PC-9 (cell line): ENCODE measurements at regions of chr20 and their contacts with region 1.

Region 1: GRCh38 chr20:58017237-58017969 is 211.1 kb downstream of the ANKRD60 start:
- DNase-seq: peak; percentile 80 to 95
- H3K4me3 ChIP-seq: no peak overlapping the region; the same call in 1 of the 2 replicates
- H3K27ac ChIP-seq: peak overlapping the region; percentile 93
- H3K4me1 ChIP-seq: peaks cover 87% of the 10 kb centered on the region
- H3K27me3 ChIP-seq: no peaks in the 10 kb centered on the region
- CTCF ChIP-seq: no peak

Region 2: DNA sequence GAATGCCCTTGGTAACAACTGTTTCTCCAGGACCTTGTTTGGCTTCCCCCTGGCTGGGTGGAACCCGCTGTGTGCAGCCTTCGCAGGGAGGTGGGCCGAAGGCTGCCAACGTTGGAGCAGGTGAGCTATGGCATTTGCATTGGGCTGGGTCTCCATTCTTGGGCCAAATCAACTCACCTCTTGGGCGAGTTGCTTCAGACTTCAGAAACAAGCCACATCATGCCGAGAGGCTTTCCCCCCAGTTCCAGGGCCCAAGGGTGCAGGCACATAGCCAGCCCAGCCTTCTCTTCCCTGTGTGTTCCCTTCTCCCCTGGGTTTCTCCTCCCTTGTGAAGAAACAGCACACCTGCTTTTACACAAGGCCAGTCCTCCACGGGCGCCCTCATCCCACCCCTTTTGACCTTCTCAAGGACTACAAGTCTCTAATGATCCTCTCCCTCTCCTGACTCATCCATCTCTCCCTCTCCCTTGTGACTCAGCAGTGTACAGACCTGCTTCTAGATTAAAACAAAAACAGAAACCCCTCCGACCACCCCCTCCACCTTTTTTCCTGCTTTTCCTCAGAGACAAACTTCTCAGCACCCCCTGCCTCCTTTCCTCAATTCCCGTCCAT is 1442.8 kb before region 1 on chr20:
- CTCF ChIA-PET with region 1: no interaction called
- POLR2A ChIA-PET with region 1: no interaction called
- intact Hi-C with region 1: no loop called
- DNase-seq: no peak
- H3K4me3 ChIP-seq: no peak overlapping the region
- H3K27ac ChIP-seq: no peak overlapping the region
- H3K4me1 ChIP-seq: peaks cover 12% of the 10 kb centered on the region
- H3K27me3 ChIP-seq: no peaks in the 10 kb centered on the region
- CTCF ChIP-seq: no peak

Region 3: DNA sequence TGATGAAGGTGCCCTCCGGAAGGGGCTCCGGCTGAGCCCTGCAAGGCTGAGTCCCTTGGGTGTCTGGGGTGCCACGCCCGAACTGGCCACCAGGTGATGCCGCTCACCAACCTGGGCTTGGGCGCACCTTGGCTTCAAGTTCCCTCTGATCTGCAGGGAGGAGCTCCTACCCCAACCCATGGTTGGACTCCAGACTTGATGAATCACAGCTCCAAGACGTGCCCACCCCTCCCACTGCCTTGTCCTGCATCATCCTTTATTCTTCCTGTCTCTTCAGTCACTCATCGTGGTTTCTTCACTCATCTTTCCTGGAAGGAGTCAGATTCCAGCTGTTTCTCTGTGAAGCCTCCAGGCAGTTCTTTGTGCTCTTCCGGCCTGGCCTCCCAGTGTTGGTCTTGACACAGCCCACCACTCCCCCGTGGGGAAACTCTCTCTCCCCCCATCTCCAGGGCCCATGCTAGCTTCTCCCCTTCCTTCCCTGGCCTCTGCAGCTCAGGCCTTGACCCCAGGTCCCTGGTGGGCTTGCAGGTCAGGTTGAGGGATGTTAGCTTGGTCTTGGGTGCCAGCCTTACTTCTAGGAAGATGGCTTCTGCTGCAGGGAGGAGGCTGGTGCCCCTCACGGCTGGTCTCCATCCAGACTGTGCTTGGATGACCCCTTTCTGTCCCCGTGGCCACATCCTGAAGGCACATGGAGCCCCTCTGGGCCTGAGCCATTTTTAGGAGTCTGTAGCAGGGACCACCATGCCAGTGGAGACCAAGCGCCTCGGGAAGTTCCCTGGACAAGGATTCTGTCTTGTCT is 394.6 kb before region 1 on chr20:
- CTCF ChIA-PET with region 1: interaction called, 3 read pairs
- POLR2A ChIA-PET with region 1: interaction called, 3 read pairs
- intact Hi-C with region 1: loop called (anchors 10 kb)
- DNase-seq: peak; percentile 83 to 90
- H3K4me3 ChIP-seq: no peak overlapping the region
- H3K27ac ChIP-seq: no peak overlapping the region
- H3K4me1 ChIP-seq: peaks cover 24% of the 10 kb centered on the region
- H3K27me3 ChIP-seq: no peaks in the 10 kb centered on the region
- CTCF ChIP-seq: peak; percentile 99

Region 4: GRCh38 chr20:57718490-57719271 is 298.7 kb before region 1 on chr20:
- CTCF ChIA-PET with region 1: no interaction called
- POLR2A ChIA-PET with region 1: no interaction called
- intact Hi-C with region 1: loop called (anchors 1 kb)
- DNase-seq: peak; percentile 97 to 98
- H3K4me3 ChIP-seq: peak overlapping the region; percentile 60
- H3K27ac ChIP-seq: peak overlapping the region; percentile 76
- H3K4me1 ChIP-seq: peaks cover 41% of the 10 kb centered on the region
- H3K27me3 ChIP-seq: no peaks in the 10 kb centered on the region
- CTCF ChIP-seq: no peak

Region 5: GRCh38 chr20:57902290-57902872 is 115.0 kb before region 1 on chr20:
- CTCF ChIA-PET with region 1: no interaction called
- POLR2A ChIA-PET with region 1: no interaction called
- intact Hi-C with region 1: loop called (anchors 1 kb)
- DNase-seq: peak; percentile 43 to 75
- H3K4me3 ChIP-seq: no peak overlapping the region
- H3K27ac ChIP-seq: no peak overlapping the region
- H3K4me1 ChIP-seq: peaks cover 30% of the 10 kb centered on the region
- H3K27me3 ChIP-seq: no peaks in the 10 kb centered on the region
- CTCF ChIP-seq: peak; percentile 45; the same call in 1 of the 2 replicates

Region 6: DNA sequence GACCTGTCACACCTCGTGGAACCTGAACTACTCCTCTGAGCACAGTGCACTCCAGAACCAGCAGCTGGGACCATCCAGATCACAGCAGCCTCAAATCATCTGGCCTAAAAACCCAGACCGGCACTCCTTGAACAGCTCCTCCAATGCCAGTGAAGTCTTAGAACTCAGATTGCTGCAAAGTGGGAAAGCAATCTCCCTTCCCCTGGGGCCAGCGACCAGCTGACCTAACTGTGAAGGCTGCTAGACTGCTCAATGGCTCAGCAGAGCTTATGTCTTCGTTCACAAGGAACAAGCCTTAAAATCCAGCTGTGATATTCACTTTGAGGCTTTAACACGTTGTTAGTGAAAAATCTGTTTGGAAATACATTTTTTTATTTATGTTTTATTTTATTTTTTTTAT is 32.1 kb before region 1 on chr20:
- CTCF ChIA-PET with region 1: no interaction called
- POLR2A ChIA-PET with region 1: no interaction called
- intact Hi-C with region 1: no loop called
- DNase-seq: no peak
- H3K4me3 ChIP-seq: no peak overlapping the region
- H3K27ac ChIP-seq: no peak overlapping the region
- H3K4me1 ChIP-seq: peaks cover 11% of the 10 kb centered on the region
- H3K27me3 ChIP-seq: no peaks in the 10 kb centered on the region
- CTCF ChIP-seq: no peak

Region 7: GRCh38 chr20:58102260-58102659 is 84.9 kb after region 1 on chr20:
- CTCF ChIA-PET with region 1: no interaction called
- POLR2A ChIA-PET with region 1: no interaction called
- intact Hi-C with region 1: loop called (anchors 2 kb)
- DNase-seq: peak; percentile 69 to 72
- H3K4me3 ChIP-seq: no peak overlapping the region
- H3K27ac ChIP-seq: peak overlapping the region; percentile 20; the same call in 1 of the 2 replicates
- H3K4me1 ChIP-seq: peaks cover 23% of the 10 kb centered on the region
- H3K27me3 ChIP-seq: no peaks in the 10 kb centered on the region
- CTCF ChIP-seq: no peak

Region 8: GRCh38 chr20:58131551-58132142 is 114.2 kb after region 1 on chr20:
- CTCF ChIA-PET with region 1: no interaction called
- POLR2A ChIA-PET with region 1: no interaction called
- intact Hi-C with region 1: loop called (anchors 1 kb)
- DNase-seq: peak; percentile 73 to 95
- H3K4me3 ChIP-seq: peak overlapping the region; percentile 35; the same call in 1 of the 2 replicates
- H3K27ac ChIP-seq: peak overlapping the region; percentile 87
- H3K4me1 ChIP-seq: peaks cover 97% of the 10 kb centered on the region
- H3K27me3 ChIP-seq: no peaks in the 10 kb centered on the region
- CTCF ChIP-seq: no peak